ENCODE measurements at regions of chr2 and their contacts with region 1.

Region 1: GRCh38 chr2:176088048-176088936 is 4.2 kb upstream of the HOXD13 start:
- DNase-seq: peak; percentile 86
- H3K4me3 ChIP-seq: peak overlapping the region; percentile 40 to 52
- H3K27ac ChIP-seq: no peak overlapping the region
- H3K4me1 ChIP-seq: peaks cover 0 to 24% of the 10 kb centered on the region in 2 experiments; a peak in 1 of 4 replicates
- H3K27me3 ChIP-seq: peaks cover 95% of the 10 kb centered on the region
- CTCF ChIP-seq: peak; percentile 78
- EP300 ChIP-seq: no peak
- RAD21 ChIP-seq: peak; percentile 75

Region 2: GRCh38 chr2:175309799-175310198 is 778.5 kb before region 1 on chr2:
- CTCF ChIA-PET with region 1: interaction called, 13 read pairs
- POLR2A ChIA-PET with region 1: no interaction called
- DNase-seq: peak; percentile 54
- H3K4me3 ChIP-seq: no peak overlapping the region; a peak in 1 of 4 replicates
- H3K27ac ChIP-seq: no peak overlapping the region
- H3K4me1 ChIP-seq: no peaks in the 10 kb centered on the region
- H3K27me3 ChIP-seq: no peaks in the 10 kb centered on the region; the same call in 1 of the 2 replicates
- CTCF ChIP-seq: peak; percentile 47
- EP300 ChIP-seq: no peak
- RAD21 ChIP-seq: peak; percentile 77

Region 3: DNA sequence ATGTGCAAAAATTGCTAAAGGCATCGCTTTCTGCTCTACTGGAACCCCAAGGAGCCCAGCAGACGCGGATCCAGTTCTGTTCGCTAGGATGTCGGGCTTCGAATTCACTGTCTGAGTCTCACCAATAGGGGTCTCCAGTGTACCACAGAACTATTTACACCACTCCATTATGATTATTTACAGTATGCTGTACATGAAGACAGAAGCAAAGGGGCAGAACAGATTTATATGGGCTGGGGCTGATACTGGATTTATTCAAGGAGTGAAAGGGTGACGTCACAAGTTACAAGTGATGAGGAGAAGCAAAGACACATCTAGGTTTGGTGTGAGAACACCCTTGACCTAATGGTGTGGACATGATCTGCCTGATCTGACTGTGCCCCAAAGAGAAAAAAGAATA is 721.5 kb before region 1 on chr2:
- CTCF ChIA-PET with region 1: interaction called, 262 read pairs
- POLR2A ChIA-PET with region 1: no interaction called
- DNase-seq: peak; percentile 49
- H3K4me3 ChIP-seq: peak overlapping the region in 1 of 2 experiments; percentile 47; a peak in 1 of 4 replicates
- H3K27ac ChIP-seq: no peak overlapping the region
- H3K4me1 ChIP-seq: peaks cover 0 to 19% of the 10 kb centered on the region in 2 experiments; a peak in 2 of 4 replicates
- H3K27me3 ChIP-seq: no peaks in the 10 kb centered on the region; the same call in 1 of the 2 replicates
- CTCF ChIP-seq: peak; percentile 83
- EP300 ChIP-seq: no peak; a peak in 1 of 4 replicates
- RAD21 ChIP-seq: peak; percentile 94

Region 4: GRCh38 chr2:175690113-175690837 is 398.0 kb before region 1 on chr2:
- CTCF ChIA-PET with region 1: interaction called, 261 read pairs
- POLR2A ChIA-PET with region 1: no interaction called
- DNase-seq: peak; percentile 24
- H3K4me3 ChIP-seq: no peak overlapping the region
- H3K27ac ChIP-seq: no peak overlapping the region
- H3K4me1 ChIP-seq: peaks cover 0 to 15% of the 10 kb centered on the region in 2 experiments; a peak in 2 of 4 replicates
- H3K27me3 ChIP-seq: peaks cover 8% of the 10 kb centered on the region; the same call in 1 of the 2 replicates
- CTCF ChIP-seq: peak; percentile 83
- EP300 ChIP-seq: no peak
- RAD21 ChIP-seq: peak; percentile 90

Region 5: DNA sequence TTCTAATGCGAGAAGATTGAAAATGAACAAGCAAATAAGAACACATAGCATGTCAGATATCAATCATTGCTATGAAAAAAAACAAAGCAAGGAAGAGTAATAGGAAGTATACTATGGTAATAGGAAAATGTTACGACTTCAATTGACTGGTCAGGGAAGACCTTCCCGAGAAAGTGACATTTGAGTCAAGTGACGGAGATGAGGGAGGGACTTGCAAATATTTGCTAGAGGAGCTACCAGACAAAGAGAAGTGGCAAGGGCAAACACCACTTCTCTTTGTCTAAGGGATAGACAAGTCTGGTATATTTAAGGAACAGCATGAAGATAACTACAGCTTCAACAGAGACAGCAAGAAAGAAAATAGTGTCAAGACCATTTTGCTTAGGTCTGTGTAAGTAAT is 26.1 kb before region 1 on chr2:
- CTCF ChIA-PET with region 1: no interaction called
- POLR2A ChIA-PET with region 1: no interaction called
- DNase-seq: no peak
- H3K4me3 ChIP-seq: no peak overlapping the region
- H3K27ac ChIP-seq: no peak overlapping the region
- H3K4me1 ChIP-seq: no peaks in the 10 kb centered on the region
- H3K27me3 ChIP-seq: no peaks in the 10 kb centered on the region; the same call in 1 of the 2 replicates
- CTCF ChIP-seq: no peak
- EP300 ChIP-seq: no peak
- RAD21 ChIP-seq: no peak

Region 6: GRCh38 chr2:176072951-176073904 is 15.1 kb before region 1 on chr2:
- CTCF ChIA-PET with region 1: interaction called, 10 read pairs
- POLR2A ChIA-PET with region 1: no interaction called
- DNase-seq: no peak
- H3K4me3 ChIP-seq: no peak overlapping the region
- H3K27ac ChIP-seq: no peak overlapping the region
- H3K4me1 ChIP-seq: no peaks in the 10 kb centered on the region
- H3K27me3 ChIP-seq: peaks cover 7% of the 10 kb centered on the region
- CTCF ChIP-seq: no peak
- EP300 ChIP-seq: no peak
- RAD21 ChIP-seq: no peak